ENCODE measurements at regions of chr19 and their contacts with region 1.

Region 1: DNA sequence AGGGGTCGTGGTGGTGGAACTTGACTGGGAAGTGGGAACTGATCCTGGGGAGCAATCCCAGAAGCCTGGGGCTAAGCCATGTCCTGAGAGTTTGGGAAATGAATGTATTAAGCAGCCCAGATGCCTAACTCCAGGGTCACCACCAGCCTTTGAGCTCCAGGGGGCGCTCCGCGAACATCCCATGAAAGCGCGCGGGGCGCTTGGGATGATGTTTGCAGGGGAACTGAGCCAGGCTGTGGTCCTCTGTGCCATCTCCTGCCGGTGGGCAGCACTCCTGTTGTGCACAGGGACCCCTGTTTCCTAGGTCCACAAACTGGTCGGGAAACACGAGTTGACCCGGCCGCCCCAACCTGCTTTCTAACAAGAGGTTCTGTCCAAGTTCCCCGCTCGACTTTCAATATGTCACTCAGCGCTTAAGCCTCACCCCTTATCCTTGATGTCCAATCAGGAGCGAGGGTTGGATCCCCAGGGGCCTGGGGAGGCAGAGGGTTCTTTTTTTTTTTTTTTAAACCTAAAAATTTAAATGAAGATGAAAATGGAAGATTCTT is 14.4 kb downstream of the LEUTX start:
- DNase-seq: peak; percentile 80
- H3K4me3 ChIP-seq: peak overlapping the region; percentile 54 to 65
- H3K27ac ChIP-seq: no peak overlapping the region
- H3K4me1 ChIP-seq: no peaks in the 10 kb centered on the region
- H3K27me3 ChIP-seq: peaks cover 25% of the 10 kb centered on the region; the same call in 1 of the 2 replicates
- CTCF ChIP-seq: peak; percentile 94
- EP300 ChIP-seq: no peak
- RAD21 ChIP-seq: peak; percentile 87

Region 2: DNA sequence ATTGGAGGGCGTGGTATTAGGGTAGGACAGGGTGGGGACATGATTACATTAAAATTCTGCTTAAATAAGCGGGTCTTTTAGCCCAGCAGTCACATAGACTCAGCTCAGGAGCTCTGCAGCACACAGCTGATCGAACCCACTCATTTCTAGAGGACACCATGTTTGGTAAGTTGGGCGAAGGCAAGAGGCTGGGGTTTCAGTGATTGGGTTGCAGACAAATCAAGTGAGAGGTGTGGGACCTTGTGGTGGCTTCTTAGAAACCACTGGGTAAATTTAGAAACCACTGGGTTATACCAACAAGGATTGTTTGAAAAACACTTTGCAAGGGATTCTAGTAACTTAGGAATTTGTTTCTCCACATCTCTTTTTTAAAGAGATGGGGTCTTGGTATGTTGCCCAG is 14.3 kb before region 1 on chr19 and contains the start of gene LEUTX:
- CTCF ChIA-PET with region 1: interaction called, 16 read pairs
- POLR2A ChIA-PET with region 1: no interaction called
- DNase-seq: no peak
- H3K4me3 ChIP-seq: no peak within 1 kb of the TSS
- H3K27ac ChIP-seq: no peak within 1 kb of the TSS
- H3K4me1 ChIP-seq: no peaks in the 10 kb centered on the region
- H3K27me3 ChIP-seq: peaks cover 36% of the 10 kb centered on the region; the same call in 1 of the 2 replicates
- CTCF ChIP-seq: no peak
- EP300 ChIP-seq: no peak
- RAD21 ChIP-seq: no peak
- polyA plus RNA-seq, gene LEUTX: not detected in 2 replicates

Region 3: DNA sequence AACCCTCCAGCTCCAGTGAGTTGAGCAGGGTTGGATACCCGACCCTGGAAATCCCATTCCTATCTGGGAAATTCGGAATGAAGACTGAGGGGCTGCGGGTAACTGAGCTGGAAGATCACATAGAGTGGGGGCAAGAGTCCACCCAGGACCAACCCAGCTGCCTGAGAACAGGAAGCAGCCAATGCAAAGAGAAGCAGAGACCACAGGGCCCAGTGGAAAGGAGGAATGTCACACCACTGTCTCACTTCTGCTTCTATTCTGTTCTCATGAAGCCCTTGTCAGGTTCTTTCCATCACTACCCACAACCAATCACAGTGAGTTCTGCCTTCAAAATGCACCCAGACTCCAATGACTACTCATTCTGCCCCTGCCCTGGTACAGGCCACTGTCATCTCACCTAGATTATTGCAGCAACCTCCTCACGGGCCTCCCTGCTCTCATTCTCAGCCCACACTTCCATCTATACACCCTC is 25.6 kb after region 1 on chr19:
- CTCF ChIA-PET with region 1: interaction called, 10 read pairs
- POLR2A ChIA-PET with region 1: interaction called, 3 read pairs
- DNase-seq: no peak
- H3K4me3 ChIP-seq: no peak overlapping the region
- H3K27ac ChIP-seq: no peak overlapping the region
- H3K4me1 ChIP-seq: peaks cover 0 to 4% of the 10 kb centered on the region in 2 experiments; a peak in 1 of 4 replicates
- H3K27me3 ChIP-seq: no peaks in the 10 kb centered on the region
- CTCF ChIP-seq: no peak
- EP300 ChIP-seq: no peak
- RAD21 ChIP-seq: no peak

Region 4: GRCh38 chr19:39970675-39971379 is 177.8 kb after region 1 on chr19 and contains the start of gene PSMC4:
- CTCF ChIA-PET with region 1: interaction called, 19 read pairs
- POLR2A ChIA-PET with region 1: no interaction called
- DNase-seq: peak; percentile 96
- H3K4me3 ChIP-seq: peak within 1 kb of the TSS; percentile 71 to 98
- H3K27ac ChIP-seq: peak within 1 kb of the TSS; percentile 70 to 82
- H3K4me1 ChIP-seq: peaks cover 11 to 12% of the 10 kb centered on the region in 2 experiments; a peak in 2 of 4 replicates
- H3K27me3 ChIP-seq: no peaks in the 10 kb centered on the region
- CTCF ChIP-seq: peak; percentile 75
- EP300 ChIP-seq: no peak
- RAD21 ChIP-seq: peak; percentile 73
- polyA plus RNA-seq, gene PSMC4: 172 and 173 TPM in 2 replicates

Measured in SK-N-SH (cell line).